AG04449 (cell line): ENCODE measurements at regions of chr14 and their contacts with region 1.

Region 1: GRCh38 chr14:49550286-49551184 is 35.6 kb downstream of the RPS29 start:
- DNase-seq: no peak
- H3K4me3 ChIP-seq: no peak overlapping the region
- CTCF ChIP-seq: no peak

Region 2: GRCh38 chr14:49447540-49448107 is 102.9 kb before region 1 on chr14:
- CTCF ChIA-PET with region 1: no interaction called
- POLR2A ChIA-PET with region 1: no interaction called
- DNase-seq: no peak
- H3K4me3 ChIP-seq: no peak overlapping the region
- CTCF ChIP-seq: no peak

Region 3: GRCh38 chr14:49497725-49498348 is 52.7 kb before region 1 on chr14:
- CTCF ChIA-PET with region 1: interaction called, 12 read pairs
- POLR2A ChIA-PET with region 1: no interaction called
- DNase-seq: peak; percentile 14
- H3K4me3 ChIP-seq: no peak overlapping the region
- CTCF ChIP-seq: peak; percentile 57

Region 4: DNA sequence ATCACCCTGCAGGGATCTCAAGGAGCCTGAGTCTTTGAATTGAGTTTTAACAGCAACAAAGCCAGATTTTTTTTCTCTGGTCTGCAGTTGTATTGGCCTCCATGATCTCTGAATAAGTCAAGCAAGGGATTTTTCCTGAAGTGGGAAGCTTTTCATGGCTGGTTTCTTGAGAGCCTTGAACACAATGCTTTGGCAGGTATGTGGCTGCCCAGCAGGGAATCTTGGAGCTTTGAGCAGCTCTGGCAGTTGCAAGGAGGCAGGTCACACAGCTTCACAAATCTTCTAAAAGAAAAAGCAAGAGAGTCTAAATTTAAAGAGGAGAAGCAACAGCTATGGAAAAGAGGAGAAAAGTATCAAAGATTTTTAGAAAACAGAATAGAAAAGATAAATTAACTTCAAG is 24.4 kb before region 1 on chr14:
- CTCF ChIA-PET with region 1: no interaction called
- POLR2A ChIA-PET with region 1: no interaction called
- DNase-seq: no peak
- H3K4me3 ChIP-seq: no peak overlapping the region
- CTCF ChIP-seq: no peak

Region 5: DNA sequence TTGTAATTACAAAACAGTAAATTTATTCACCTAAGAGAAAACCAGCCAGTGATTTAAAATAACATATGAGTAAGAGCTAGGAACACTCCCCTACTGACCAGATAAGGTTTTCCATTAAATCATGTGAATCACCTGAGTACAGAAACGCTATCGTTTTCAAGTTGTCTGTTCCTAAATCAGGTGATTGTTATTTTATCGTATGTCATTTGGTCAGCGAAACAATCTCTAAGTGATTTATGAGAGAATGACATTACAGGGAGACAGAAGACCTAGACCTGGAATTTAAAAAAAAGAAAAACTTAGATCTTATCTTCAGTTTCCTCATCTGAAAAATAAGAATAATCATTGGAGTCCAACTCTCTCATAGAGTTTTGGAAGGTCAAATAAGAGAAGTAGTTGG is 11.6 kb before region 1 on chr14:
- CTCF ChIA-PET with region 1: interaction called, 12 read pairs
- POLR2A ChIA-PET with region 1: no interaction called
- DNase-seq: no peak
- H3K4me3 ChIP-seq: no peak overlapping the region
- CTCF ChIP-seq: no peak